Activated CD4-positive, alpha-beta memory T cell treated with anti-CD3 and anti-CD28 coated beads for 36 hours (primary cell): ENCODE measurements at regions of chr13 and their contacts with region 1.

Region 1: DNA sequence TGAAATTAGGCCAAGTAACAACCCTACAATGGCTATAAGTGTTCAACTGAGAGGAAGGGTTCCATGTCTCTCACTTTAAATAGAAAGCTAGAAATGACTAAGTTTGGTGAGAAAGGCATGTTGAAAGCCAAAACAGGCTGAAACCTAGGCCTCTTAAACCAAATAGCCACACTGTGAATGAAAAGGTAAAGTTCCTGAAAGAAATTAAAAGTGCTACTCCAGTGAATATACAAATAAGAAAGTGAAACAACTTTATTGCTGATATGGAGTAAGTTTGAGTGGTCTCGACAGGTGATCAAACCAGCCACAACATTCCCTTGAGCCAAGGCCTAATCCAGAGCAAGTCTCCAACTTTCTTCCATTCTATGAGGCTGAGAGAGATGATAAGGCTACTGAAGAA is 209.6 kb downstream of the KLF12 start:
- DNase-seq: no peak
- H3K4me3 Mint-ChIP-seq: peak overlapping the region; percentile 5
- H3K27ac Mint-ChIP-seq: peak overlapping the region; percentile 44
- H3K4me1 Mint-ChIP-seq: peaks cover 76% of the 10 kb centered on the region
- H3K27me3 Mint-ChIP-seq: no peaks in the 10 kb centered on the region

Region 2: DNA sequence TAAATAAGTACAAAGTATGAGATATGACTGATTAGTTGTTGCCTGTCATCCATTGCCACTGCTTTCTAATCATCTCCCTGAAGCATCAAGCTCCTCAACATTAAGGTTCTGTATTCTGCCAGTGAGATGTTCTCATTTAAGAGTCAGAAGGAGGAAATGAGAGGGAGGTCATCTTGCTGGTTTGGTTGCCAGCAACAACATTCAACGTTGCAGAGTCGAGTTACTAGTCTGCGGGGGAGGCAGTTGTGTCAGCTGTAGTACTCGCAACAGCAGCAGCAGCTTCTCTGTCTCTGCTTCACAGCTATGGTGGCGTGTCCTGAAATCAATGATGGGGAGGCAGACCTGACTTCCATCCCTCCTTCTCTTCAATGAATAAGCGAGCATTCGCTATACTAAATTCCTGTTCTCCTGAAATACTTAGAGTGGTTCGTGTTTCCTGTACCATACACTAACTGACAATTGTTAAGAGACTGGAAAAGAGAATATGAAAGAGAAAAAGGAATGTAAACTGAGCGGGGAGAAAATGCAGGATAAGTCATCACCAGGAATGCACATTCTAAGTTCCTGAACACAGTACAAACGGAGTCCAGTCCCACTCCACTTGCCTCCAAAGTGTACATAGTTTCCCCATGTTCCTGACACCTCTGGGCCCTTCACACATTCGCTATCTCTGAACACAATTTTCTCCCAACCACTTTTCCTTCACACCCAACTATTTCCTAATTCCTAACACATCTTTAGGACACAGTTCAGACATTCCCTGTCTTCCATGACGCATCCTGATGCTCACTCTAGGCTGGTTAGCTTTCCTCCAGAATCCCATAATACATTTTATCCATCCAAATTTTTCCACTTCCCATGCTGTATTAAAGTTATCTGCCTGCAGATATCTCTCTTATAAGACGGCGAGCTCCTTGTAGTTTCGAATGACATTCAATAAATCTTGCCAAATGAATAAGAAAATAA is 53.4 kb before region 1 on chr13:
- CTCF ChIA-PET with region 1: no interaction called
- POLR2A ChIA-PET with region 1: no interaction called
- intact Hi-C with region 1: loop called (anchors 2 kb)
- DNase-seq: peak; percentile 64
- H3K4me3 Mint-ChIP-seq: no peak overlapping the region
- H3K27ac Mint-ChIP-seq: no peak overlapping the region
- H3K4me1 Mint-ChIP-seq: peaks cover 58% of the 10 kb centered on the region
- H3K27me3 Mint-ChIP-seq: no peaks in the 10 kb centered on the region

Region 3: GRCh38 chr13:73894995-73895571 is 29.5 kb before region 1 on chr13:
- CTCF ChIA-PET with region 1: no interaction called
- POLR2A ChIA-PET with region 1: no interaction called
- intact Hi-C with region 1: loop called (anchors 2 kb)
- DNase-seq: no peak
- H3K4me3 Mint-ChIP-seq: no peak overlapping the region
- H3K27ac Mint-ChIP-seq: peak overlapping the region; percentile 35
- H3K4me1 Mint-ChIP-seq: peaks cover 53% of the 10 kb centered on the region
- H3K27me3 Mint-ChIP-seq: no peaks in the 10 kb centered on the region

Region 4: DNA sequence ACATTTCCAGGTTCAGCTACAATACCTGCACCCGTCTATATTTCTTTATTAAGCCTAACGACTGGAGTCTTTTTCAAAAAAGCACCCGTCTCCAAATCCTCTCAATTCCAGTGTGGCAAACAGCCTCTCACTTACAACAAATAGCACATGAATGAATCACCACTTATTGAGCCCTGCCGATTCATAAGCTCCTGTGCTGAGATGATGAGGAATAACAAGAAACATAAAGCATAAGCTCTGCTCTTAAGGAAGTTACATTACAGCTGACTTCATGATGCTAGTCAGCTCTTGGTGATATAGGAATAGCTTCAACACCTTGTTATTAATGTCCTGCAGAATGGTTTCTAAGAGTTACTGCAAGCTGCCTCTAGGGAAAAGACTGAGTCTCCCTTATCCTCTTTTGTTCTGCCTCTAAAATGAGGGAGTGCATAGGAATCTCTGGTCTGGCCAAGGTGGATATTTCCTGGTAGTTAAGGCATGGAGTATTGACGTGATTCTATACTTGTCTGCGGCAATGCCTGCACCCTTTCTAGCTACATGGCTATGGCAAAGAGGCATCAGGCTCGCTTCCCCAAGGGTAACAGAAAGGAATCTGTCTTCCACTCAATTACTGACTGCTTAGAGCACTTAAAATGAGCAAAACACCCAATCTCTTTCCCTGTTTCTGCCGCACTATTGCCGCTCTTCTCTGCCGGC is 13.9 kb after region 1 on chr13:
- CTCF ChIA-PET with region 1: no interaction called
- POLR2A ChIA-PET with region 1: no interaction called
- intact Hi-C with region 1: loop called (anchors 1 kb)
- DNase-seq: no peak
- H3K4me3 Mint-ChIP-seq: no peak overlapping the region
- H3K27ac Mint-ChIP-seq: no peak overlapping the region
- H3K4me1 Mint-ChIP-seq: peaks cover 77% of the 10 kb centered on the region
- H3K27me3 Mint-ChIP-seq: no peaks in the 10 kb centered on the region

Region 5: GRCh38 chr13:73984949-73985691 is 60.5 kb after region 1 on chr13:
- CTCF ChIA-PET with region 1: no interaction called
- POLR2A ChIA-PET with region 1: no interaction called
- intact Hi-C with region 1: no loop called
- DNase-seq: peak; percentile 89
- H3K4me3 Mint-ChIP-seq: peak overlapping the region; percentile 63
- H3K27ac Mint-ChIP-seq: peak overlapping the region; percentile 90
- H3K4me1 Mint-ChIP-seq: peaks cover 46% of the 10 kb centered on the region
- H3K27me3 Mint-ChIP-seq: no peaks in the 10 kb centered on the region

Region 6: DNA sequence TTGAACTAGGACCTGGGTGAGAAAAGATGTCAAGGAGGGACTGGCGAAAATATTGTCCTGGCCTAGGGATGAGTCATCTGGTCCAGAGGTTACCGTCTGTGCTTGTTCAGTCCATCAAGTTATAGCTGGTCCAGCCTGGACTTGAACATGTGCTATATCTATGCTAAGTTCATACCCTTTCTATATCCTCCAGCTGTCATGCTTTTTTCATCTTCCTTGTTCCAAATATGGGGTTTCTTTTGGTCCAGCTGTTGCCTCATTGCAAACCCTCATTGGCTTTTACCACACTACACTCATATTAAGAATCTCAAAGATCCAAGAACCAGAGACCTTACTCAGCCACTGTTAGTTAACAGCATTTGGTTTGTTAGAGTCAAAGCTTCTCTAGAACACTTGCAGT is 228.7 kb after region 1 on chr13:
- CTCF ChIA-PET with region 1: no interaction called
- POLR2A ChIA-PET with region 1: no interaction called
- intact Hi-C with region 1: no loop called
- DNase-seq: no peak
- H3K4me3 Mint-ChIP-seq: no peak overlapping the region
- H3K27ac Mint-ChIP-seq: no peak overlapping the region
- H3K4me1 Mint-ChIP-seq: no peaks in the 10 kb centered on the region
- H3K27me3 Mint-ChIP-seq: no peaks in the 10 kb centered on the region